Activated CD4-positive, alpha-beta T cell treated with anti-CD3 and anti-CD28 coated beads for 36 hours (primary cell): ENCODE measurements at regions of chr2 and their contacts with region 1.

Region 1: GRCh38 chr2:148644883-148645538 is 460 bp downstream of the EPC2 start:
- DNase-seq: peak; percentile 96
- ATAC-seq: peak; percentile 74
- H3K4me3 Mint-ChIP-seq: peak overlapping the region; percentile 83
- H3K27ac Mint-ChIP-seq: peak overlapping the region; percentile 94
- H3K4me1 Mint-ChIP-seq: peaks cover 44% of the 10 kb centered on the region
- H3K27me3 Mint-ChIP-seq: peaks cover 13% of the 10 kb centered on the region

Region 2: DNA sequence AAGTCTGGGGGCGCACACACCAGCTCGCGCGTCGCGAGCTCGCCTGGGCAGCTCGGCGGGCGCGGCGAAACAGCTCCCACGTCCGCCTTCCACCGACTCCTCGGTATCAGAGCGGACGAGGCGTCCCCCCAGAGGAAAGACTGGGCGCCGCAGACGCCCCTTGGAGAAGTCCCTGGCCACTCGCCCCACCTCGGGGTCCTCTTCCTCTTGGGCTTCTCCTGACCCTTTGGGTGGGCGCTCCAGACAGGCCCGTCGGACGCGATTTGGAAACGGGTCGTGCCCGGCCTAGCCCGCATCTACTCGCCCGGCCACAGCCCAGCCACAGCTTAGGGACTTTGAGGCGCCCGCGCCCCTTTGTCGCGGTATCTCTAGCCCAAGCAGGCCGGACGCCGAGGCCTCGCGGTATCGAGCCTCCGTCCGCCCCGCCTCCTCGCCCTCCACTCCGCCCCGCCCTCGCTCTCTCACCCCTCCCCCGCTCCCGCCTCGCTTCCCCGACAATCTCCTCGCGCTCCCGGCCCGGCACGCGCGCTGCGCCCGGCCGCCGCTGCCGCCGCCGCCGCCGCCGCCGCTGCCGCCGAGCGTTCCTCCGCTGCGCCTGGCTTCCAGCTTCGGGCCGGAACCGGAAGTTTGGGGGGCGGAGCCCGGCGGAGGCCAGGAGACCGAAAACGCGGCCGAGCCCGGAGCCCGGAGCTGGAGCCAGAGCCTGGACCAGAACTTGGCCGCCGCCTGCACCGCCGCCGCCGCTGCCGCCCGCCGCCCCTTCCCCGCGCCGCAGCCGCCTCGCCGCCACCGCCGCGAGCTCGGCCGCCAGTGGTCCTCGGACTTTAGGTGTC is 800.9 kb before region 1 on chr2:
- CTCF ChIA-PET with region 1: interaction called, 3 read pairs
- POLR2A ChIA-PET with region 1: no interaction called
- intact Hi-C with region 1: loop called in 1 of 2 experiments (anchors 1 kb)
- DNase-seq: peak; percentile 93
- ATAC-seq: peak; percentile 82
- H3K4me3 Mint-ChIP-seq: peak overlapping the region; percentile 82
- H3K27ac Mint-ChIP-seq: peak overlapping the region; percentile 77
- H3K4me1 Mint-ChIP-seq: peaks cover 34% of the 10 kb centered on the region
- H3K27me3 Mint-ChIP-seq: peaks cover 14% of the 10 kb centered on the region

Region 3: GRCh38 chr2:148524519-148524919 is 120.5 kb before region 1 on chr2:
- CTCF ChIA-PET with region 1: interaction called, 6 read pairs
- POLR2A ChIA-PET with region 1: interaction called, 8 read pairs
- intact Hi-C with region 1: loop called (anchors 1 kb)
- DNase-seq: peak; percentile 80
- ATAC-seq: peak; percentile 87
- H3K4me3 Mint-ChIP-seq: peak overlapping the region; percentile 1
- H3K27ac Mint-ChIP-seq: peak overlapping the region; percentile 84
- H3K4me1 Mint-ChIP-seq: peaks cover 86% of the 10 kb centered on the region
- H3K27me3 Mint-ChIP-seq: no peaks in the 10 kb centered on the region

Region 4: DNA sequence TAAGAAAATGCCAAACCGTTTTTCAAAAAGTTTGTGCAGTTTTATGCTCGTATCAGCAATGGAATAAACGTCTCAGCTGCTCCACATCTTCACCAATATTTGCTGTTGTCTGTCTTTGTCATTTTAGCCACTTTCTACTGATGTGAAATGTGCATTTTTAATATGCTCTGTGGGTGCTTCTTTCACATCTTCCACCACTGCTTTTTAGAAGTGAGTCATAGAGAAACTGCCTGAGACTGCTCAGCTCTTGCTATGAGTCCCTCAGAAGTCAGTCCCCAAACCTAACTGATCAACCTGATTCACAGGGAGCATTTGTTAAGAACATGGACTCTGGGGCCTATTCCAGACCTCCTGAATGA is 41.5 kb before region 1 on chr2:
- CTCF ChIA-PET with region 1: interaction called, 4 read pairs
- POLR2A ChIA-PET with region 1: interaction called, 10 read pairs
- intact Hi-C with region 1: loop called (anchors 1 kb)
- DNase-seq: peak; percentile 49
- ATAC-seq: peak; percentile 92
- H3K4me3 Mint-ChIP-seq: no peak overlapping the region
- H3K27ac Mint-ChIP-seq: peak overlapping the region; percentile 88
- H3K4me1 Mint-ChIP-seq: peaks cover 18% of the 10 kb centered on the region
- H3K27me3 Mint-ChIP-seq: peaks cover 17% of the 10 kb centered on the region

Region 5: DNA sequence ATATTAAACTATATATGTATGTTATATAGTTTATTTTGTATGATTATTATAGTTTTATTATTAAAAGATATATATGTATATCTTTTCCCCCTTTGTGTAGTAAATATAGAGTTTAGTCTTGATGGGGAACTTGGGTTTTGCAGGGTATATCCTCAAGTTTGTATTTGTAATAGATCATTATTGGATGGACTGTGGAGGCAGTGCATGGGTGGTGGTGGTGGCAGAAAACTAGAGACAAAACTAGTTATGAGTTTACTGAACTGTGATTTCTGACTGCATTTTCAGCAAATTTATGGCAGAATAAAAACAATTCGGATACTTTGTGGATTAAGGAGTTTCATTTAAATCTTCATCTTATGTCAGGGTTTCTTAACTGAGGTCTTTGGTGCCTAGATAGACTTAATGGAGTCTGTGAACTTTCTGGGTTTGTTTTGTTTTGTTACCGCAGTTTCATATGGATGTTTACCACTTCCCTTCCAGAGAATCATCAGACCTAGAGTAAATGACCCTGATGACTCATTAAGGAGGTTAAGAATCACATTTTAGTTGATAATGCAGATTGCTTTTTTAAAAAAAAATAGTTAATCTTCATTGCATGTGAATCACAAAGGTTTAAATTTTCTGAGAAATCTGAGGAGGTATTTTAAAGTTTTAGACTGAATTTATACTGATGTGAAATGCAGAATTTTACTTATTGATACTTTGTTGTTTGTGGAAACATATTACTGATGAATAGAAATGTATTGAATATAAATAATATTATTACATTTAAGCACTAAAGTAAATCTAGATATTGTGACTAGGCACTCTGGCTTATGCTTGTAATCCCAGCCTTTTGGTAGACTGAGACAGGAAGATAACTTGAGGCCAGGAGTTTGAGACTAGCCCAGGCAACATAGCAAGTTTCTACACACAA is 14.1 kb after region 1 on chr2:
- CTCF ChIA-PET with region 1: interaction called, 19 read pairs
- POLR2A ChIA-PET with region 1: interaction called, 3 read pairs
- intact Hi-C with region 1: loop called (anchors 1 to 2 kb)
- DNase-seq: no peak
- ATAC-seq: peak; percentile 69
- H3K4me3 Mint-ChIP-seq: peak overlapping the region; percentile 43
- H3K27ac Mint-ChIP-seq: peak overlapping the region; percentile 65
- H3K4me1 Mint-ChIP-seq: peaks cover 73% of the 10 kb centered on the region
- H3K27me3 Mint-ChIP-seq: no peaks in the 10 kb centered on the region

Region 6: GRCh38 chr2:148720501-148721001 is 75.5 kb after region 1 on chr2:
- CTCF ChIA-PET with region 1: no interaction called
- POLR2A ChIA-PET with region 1: no interaction called
- intact Hi-C with region 1: loop called in 1 of 2 experiments (anchors 5 kb)
- DNase-seq: peak; percentile 44
- ATAC-seq: peak; percentile 47
- H3K4me3 Mint-ChIP-seq: no peak overlapping the region
- H3K27ac Mint-ChIP-seq: peak overlapping the region; percentile 2
- H3K4me1 Mint-ChIP-seq: peaks cover 91% of the 10 kb centered on the region
- H3K27me3 Mint-ChIP-seq: no peaks in the 10 kb centered on the region

Region 7: GRCh38 chr2:148926291-148926961 is 281.4 kb after region 1 on chr2:
- CTCF ChIA-PET with region 1: no interaction called
- POLR2A ChIA-PET with region 1: no interaction called
- intact Hi-C with region 1: loop called in 1 of 2 experiments (anchors 2 kb)
- DNase-seq: peak; percentile 78
- ATAC-seq: peak; percentile 84
- H3K4me3 Mint-ChIP-seq: peak overlapping the region; percentile 78
- H3K27ac Mint-ChIP-seq: peak overlapping the region; percentile 88
- H3K4me1 Mint-ChIP-seq: peaks cover 16% of the 10 kb centered on the region
- H3K27me3 Mint-ChIP-seq: no peaks in the 10 kb centered on the region